ENCODE measurements at regions of chr2 and their contacts with region 1.

Region 1: GRCh38 chr2:160252278-160252887 is 52.3 kb upstream of the ITGB6 start:
- DNase-seq: no peak
- ATAC-seq: peak; percentile 45
- H3K4me3 ChIP-seq: peak overlapping the region; percentile 38 to 54 (median 48)
- H3K27ac ChIP-seq: peak overlapping the region; percentile 67 to 87 (median 84)
- H3K4me1 ChIP-seq: peaks cover 51 to 60% of the 10 kb centered on the region in 2 donors
- H3K27me3 ChIP-seq: no peaks in the 10 kb centered on the region
- CTCF ChIP-seq: peak; percentile 69 to 93 (median 82)
- POLR2A ChIP-seq: no peak

Region 2: GRCh38 chr2:160984426-160985077 is 732.2 kb after region 1 on chr2:
- in situ Hi-C with region 1: loop called in 1 of 4 experiments (anchors 5 kb)
- intact Hi-C with region 1: no loop called
- DNase-seq: peak; percentile 30 to 44
- ATAC-seq: peak; percentile 84 to 95
- H3K4me3 ChIP-seq: no peak overlapping the region
- H3K27ac ChIP-seq: peak overlapping the region in 2 of 4 donors; percentile 25 to 39
- H3K4me1 ChIP-seq: peaks cover 9 to 10% of the 10 kb centered on the region in 2 donors
- H3K27me3 ChIP-seq: no peaks in the 10 kb centered on the region
- CTCF ChIP-seq: no peak
- POLR2A ChIP-seq: no peak